CD14-positive monocyte (primary cell): ENCODE measurements at regions of chr17 and their contacts with region 1.

Region 1: GRCh38 chr17:48024937-48025906 is 12.4 kb downstream of the COPZ2 start:
- DNase-seq: peak; percentile 95 to 97 (median 96)
- H3K4me3 ChIP-seq: peak overlapping the region; percentile 48 to 78 (median 50)
- H3K4me3 Mint-ChIP-seq: peak overlapping the region; percentile 87 to 97
- H3K27ac ChIP-seq: peak overlapping the region; percentile 46 to 70
- H3K27ac Mint-ChIP-seq: peak overlapping the region; percentile 90 to 97 (median 94)
- H3K4me1 ChIP-seq: peaks cover 54 to 65% of the 10 kb centered on the region in 2 donors
- H3K4me1 Mint-ChIP-seq: peaks cover 58% of the 10 kb centered on the region
- H3K27me3 ChIP-seq: no peaks in the 10 kb centered on the region
- H3K27me3 Mint-ChIP-seq: peaks cover 7 to 9% (median 8%) of the 10 kb centered on the region in 3 donors
- CTCF ChIP-seq: peak; percentile 68

Region 2: GRCh38 chr17:47895856-47896671 is 129.2 kb before region 1 on chr17 and contains the start of gene SP2:
- intact Hi-C with region 1: loop called in 1 of 2 experiments (anchors 2 kb)
- DNase-seq: peak; percentile 100
- H3K4me3 ChIP-seq: peak within 1 kb of the TSS; percentile 90 to 99 (median 92)
- H3K4me3 Mint-ChIP-seq: peak within 1 kb of the TSS; percentile 91 to 95
- H3K27ac ChIP-seq: peak within 1 kb of the TSS; percentile 69 to 95
- H3K27ac Mint-ChIP-seq: peak within 1 kb of the TSS; percentile 85 to 97 (median 95)
- H3K4me1 ChIP-seq: peaks cover 28 to 53% of the 10 kb centered on the region in 2 donors
- H3K4me1 Mint-ChIP-seq: peaks cover 45% of the 10 kb centered on the region
- H3K27me3 ChIP-seq: no peaks in the 10 kb centered on the region
- H3K27me3 Mint-ChIP-seq: no peaks in the 10 kb centered on the region
- CTCF ChIP-seq: no peak
- polyA plus RNA-seq, gene SP2: 3.1 to 26.7 (median 6.8) TPM

Region 3: GRCh38 chr17:48047741-48048383 is 22.6 kb after region 1 on chr17 and contains the start of gene NFE2L1:
- intact Hi-C with region 1: loop called in 1 of 2 experiments (anchors 2 kb)
- DNase-seq: peak; percentile 98 to 99 (median 99)
- H3K4me3 ChIP-seq: peak within 1 kb of the TSS; percentile 56 to 89 (median 72)
- H3K4me3 Mint-ChIP-seq: peak within 1 kb of the TSS; percentile 93 to 97
- H3K27ac ChIP-seq: peak within 1 kb of the TSS; percentile 86 to 97
- H3K27ac Mint-ChIP-seq: peak within 1 kb of the TSS; percentile 96 to 100 (median 100)
- H3K4me1 ChIP-seq: peaks cover 37 to 56% of the 10 kb centered on the region in 2 donors
- H3K4me1 Mint-ChIP-seq: peaks cover 60% of the 10 kb centered on the region
- H3K27me3 ChIP-seq: no peaks in the 10 kb centered on the region
- H3K27me3 Mint-ChIP-seq: peaks cover 2 to 7% (median 5%) of the 10 kb centered on the region in 3 donors
- CTCF ChIP-seq: no peak
- polyA plus RNA-seq, gene NFE2L1: 2.8 to 27.0 (median 7.1) TPM

Region 4: DNA sequence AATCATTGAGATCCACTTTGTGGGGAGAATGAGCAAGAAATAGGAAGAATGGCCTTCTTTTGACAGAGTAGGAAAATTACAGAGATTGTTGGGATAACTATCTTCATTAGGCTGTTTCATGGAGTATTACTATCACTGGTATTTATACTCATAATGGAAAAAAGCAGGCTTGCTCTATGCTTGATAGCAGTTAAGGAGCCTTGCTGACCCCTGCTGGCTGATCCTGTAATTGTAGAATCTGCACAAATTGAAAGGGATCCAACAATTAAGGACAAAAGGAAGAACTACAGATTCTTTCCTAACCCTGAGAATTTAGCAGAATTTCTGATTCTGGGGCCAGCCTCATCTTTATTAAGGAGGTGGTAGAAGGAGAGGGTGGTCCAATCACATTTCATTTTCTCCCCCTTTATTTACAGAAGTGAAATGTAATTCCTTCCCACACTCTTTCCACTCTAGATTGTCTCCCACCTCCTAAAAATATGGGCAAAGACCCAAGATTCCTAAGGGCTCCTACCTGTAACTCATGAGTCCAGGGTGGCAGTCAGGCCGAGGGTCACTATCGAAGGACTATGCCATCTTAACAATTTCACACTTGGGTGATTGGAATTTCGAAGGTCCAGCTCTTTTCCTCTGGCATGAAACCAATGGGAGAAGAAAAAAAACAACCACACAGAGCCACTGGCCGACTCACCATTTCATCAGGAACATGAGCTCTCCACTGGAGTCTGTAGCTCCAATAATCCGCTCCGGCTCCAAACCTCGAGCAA is 49.3 kb after region 1 on chr17:
- intact Hi-C with region 1: loop called (anchors 1 to 2 kb)
- DNase-seq: peak; percentile 54 to 76 (median 66)
- H3K4me3 ChIP-seq: no peak overlapping the region
- H3K4me3 Mint-ChIP-seq: no peak overlapping the region
- H3K27ac ChIP-seq: no peak overlapping the region
- H3K27ac Mint-ChIP-seq: peak overlapping the region in 1 of 7 donors; percentile 46
- H3K4me1 ChIP-seq: no peaks in the 10 kb centered on the region
- H3K4me1 Mint-ChIP-seq: peaks cover 1% of the 10 kb centered on the region
- H3K27me3 ChIP-seq: no peaks in the 10 kb centered on the region
- H3K27me3 Mint-ChIP-seq: no peaks in the 10 kb centered on the region
- CTCF ChIP-seq: peak; percentile 88

Region 5: GRCh38 chr17:48131216-48131824 is 106.1 kb after region 1 on chr17:
- intact Hi-C with region 1: loop called (anchors 2 to 5 kb)
- DNase-seq: peak; percentile 39 to 68 (median 64)
- H3K4me3 ChIP-seq: no peak overlapping the region
- H3K4me3 Mint-ChIP-seq: no peak overlapping the region
- H3K27ac ChIP-seq: no peak overlapping the region
- H3K27ac Mint-ChIP-seq: no peak overlapping the region
- H3K4me1 ChIP-seq: no peaks in the 10 kb centered on the region
- H3K4me1 Mint-ChIP-seq: no peaks in the 10 kb centered on the region
- H3K27me3 ChIP-seq: no peaks in the 10 kb centered on the region
- H3K27me3 Mint-ChIP-seq: peaks cover 0 to 8% (median 6%) of the 10 kb centered on the region in 3 donors
- CTCF ChIP-seq: peak; percentile 95

Region 6: DNA sequence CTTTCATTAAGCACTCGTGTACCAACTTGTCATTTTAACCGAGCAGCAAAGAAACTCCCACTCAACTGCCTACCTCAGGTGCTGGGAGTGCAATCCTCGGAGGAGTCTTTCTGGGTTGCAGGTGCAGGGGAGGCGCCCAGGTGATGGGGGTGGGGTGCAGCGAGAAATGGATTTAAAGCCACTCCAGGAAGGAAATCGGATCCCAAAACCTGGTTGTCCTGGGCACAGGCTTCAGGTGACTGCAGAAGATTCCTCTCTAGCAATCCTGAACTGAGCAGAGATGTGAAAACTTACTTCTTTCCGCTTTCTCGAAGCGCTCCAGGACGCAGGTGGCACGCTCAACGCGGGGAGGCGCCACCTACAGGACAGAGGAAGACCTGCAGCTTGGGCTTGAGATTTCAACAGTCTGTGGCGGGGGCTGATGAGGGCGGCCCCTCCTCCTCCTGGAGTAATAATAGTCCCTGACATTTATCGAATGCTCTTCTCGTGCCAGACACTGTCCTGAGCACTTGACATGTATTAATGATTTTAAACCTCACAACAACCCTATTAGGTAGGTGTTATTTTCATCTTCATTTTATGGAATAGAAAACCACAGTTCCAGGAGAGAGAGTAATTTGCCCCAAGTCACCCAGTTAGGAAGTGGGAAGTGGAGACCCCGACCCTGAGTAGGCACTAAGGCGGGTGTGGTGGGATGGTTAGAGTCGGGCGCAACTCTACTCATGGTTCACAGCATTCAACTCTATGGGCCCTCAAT is 432.0 kb after region 1 on chr17:
- intact Hi-C with region 1: loop called in 1 of 2 experiments (anchors 10 kb)
- DNase-seq: peak; percentile 44 to 63 (median 55)
- H3K4me3 ChIP-seq: no peak overlapping the region
- H3K4me3 Mint-ChIP-seq: peak overlapping the region in 1 of 2 donors; percentile 36
- H3K27ac ChIP-seq: no peak overlapping the region
- H3K27ac Mint-ChIP-seq: no peak overlapping the region
- H3K4me1 ChIP-seq: no peaks in the 10 kb centered on the region
- H3K4me1 Mint-ChIP-seq: peaks cover 6% of the 10 kb centered on the region
- H3K27me3 ChIP-seq: peaks cover 23 to 31% of the 10 kb centered on the region in 2 donors
- H3K27me3 Mint-ChIP-seq: peaks cover 16 to 39% (median 20%) of the 10 kb centered on the region in 3 donors
- CTCF ChIP-seq: peak; percentile 93

Region 7: DNA sequence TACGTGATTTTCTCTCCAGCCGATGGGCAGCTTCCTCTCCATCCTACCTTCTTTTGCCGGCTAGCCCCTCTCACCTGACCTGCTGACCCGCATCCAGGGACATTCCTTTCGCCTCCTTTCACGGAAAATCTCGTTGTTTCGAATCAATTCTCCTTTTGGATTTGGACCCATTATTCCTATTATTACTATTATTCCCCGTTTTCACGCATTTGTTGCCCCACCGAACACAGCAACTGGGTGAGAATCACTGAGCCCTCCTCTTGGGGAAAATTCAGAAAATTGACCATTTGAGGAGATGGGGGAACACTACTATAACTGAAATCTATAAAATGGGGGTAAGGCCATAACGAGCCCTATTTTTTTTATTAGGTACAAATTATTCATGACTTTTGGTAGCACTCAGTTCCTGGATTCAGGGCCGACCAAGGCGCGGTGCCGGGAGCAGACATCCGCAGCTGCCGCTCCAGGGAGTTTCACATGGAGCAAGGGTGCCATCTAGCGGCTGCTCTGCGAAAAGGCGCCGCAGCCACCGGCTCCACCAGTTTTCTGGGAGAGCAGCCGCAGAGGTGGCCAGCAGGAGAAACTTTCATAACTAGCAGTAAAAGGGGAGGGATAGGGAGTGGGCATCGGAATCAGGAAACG is 593.2 kb after region 1 on chr17:
- intact Hi-C with region 1: loop called in 1 of 2 experiments (anchors 5 kb)
- DNase-seq: peak; percentile 68 to 75 (median 70)
- H3K4me3 ChIP-seq: no peak overlapping the region
- H3K4me3 Mint-ChIP-seq: peak overlapping the region in 1 of 2 donors; percentile 84
- H3K27ac ChIP-seq: no peak overlapping the region
- H3K27ac Mint-ChIP-seq: no peak overlapping the region
- H3K4me1 ChIP-seq: peaks cover 4 to 7% of the 10 kb centered on the region in 2 donors
- H3K4me1 Mint-ChIP-seq: peaks cover 13% of the 10 kb centered on the region
- H3K27me3 ChIP-seq: peaks cover 86 to 100% of the 10 kb centered on the region in 2 donors
- H3K27me3 Mint-ChIP-seq: peaks cover 99 to 100% (median 99%) of the 10 kb centered on the region in 3 donors
- CTCF ChIP-seq: peak; percentile 98